Ascending aorta (tissue), 2 donors: ENCODE measurements at regions of chr3 and their contacts with region 1.

Region 1: DNA sequence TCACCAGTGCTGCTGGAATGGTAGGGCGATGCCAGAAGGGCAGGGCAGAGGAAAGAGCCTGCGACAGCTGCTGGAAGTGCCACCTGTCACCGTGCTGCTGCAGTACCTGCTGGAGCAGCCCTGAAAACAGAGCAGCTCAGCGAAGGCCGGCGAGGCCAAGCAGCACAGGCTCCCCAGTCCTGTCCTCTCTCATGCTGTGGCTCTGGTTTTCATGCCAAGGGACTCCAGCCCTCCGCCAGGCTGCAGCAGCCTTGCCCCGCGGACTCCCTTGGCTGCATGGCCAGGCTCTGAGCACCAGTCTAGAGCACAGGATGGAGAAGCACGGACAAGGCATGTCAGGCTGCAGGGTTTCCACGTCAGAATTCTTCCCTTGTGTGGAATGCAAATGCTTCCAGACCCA is 43.9 kb downstream of the ADCY5 start:
- DNase-seq: no peak
- H3K4me3 ChIP-seq: peak overlapping the region in 1 of 2 donors; percentile 40
- H3K27ac ChIP-seq: peak overlapping the region; percentile 87 to 93
- H3K4me1 ChIP-seq: peaks cover 11 to 59% of the 10 kb centered on the region in 2 donors
- H3K27me3 ChIP-seq: no peaks in the 10 kb centered on the region
- CTCF ChIP-seq: no peak

Region 2: GRCh38 chr3:123385981-123386380 is 19.0 kb before region 1 on chr3:
- intact Hi-C with region 1: loop called (anchors 2 kb)
- DNase-seq: peak in 1 of 2 donors; percentile 79
- H3K4me3 ChIP-seq: peak overlapping the region in 1 of 2 donors; percentile 12
- H3K27ac ChIP-seq: peak overlapping the region; percentile 90 to 93
- H3K4me1 ChIP-seq: peaks cover 16 to 65% of the 10 kb centered on the region in 2 donors
- H3K27me3 ChIP-seq: no peaks in the 10 kb centered on the region
- CTCF ChIP-seq: no peak